H1 (cell line): ENCODE measurements at regions of chr15 and their contacts with region 1.

Region 1: GRCh38 chr15:64841258-64842095 is at the start of gene PLEKHO2:
- DNase-seq: peak; percentile 87 to 94
- H3K4me3 ChIP-seq: peak within 1 kb of the TSS; percentile 90 to 99 (median 92)
- H3K27ac ChIP-seq: peak within 1 kb of the TSS; percentile 59; the same call in 1 of the 2 replicates
- H3K4me1 ChIP-seq: peaks cover 13 to 25% (median 17%) of the 10 kb centered on the region in 4 experiments; a peak in 6 of 7 replicates
- H3K27me3 ChIP-seq: no peaks in the 10 kb centered on the region
- CTCF ChIP-seq: peak; percentile 20 to 30 (median 28); a peak in 2 of 4 replicates
- EP300 ChIP-seq: no peak
- POLR2A ChIP-seq: peak; percentile 63 to 64
- RAD21 ChIP-seq: peak; percentile 11 to 15; a peak in 3 of 4 replicates
- total RNA-seq, gene PLEKHO2: 20.1 and 20.3 TPM in 2 replicates

Region 2: GRCh38 chr15:64816452-64816851 is 25.0 kb before region 1 on chr15:
- CTCF ChIA-PET with region 1: interaction called, 53 read pairs
- POLR2A ChIA-PET with region 1: interaction called, 381 read pairs
- DNase-seq: no peak
- H3K4me3 ChIP-seq: no peak overlapping the region
- H3K27ac ChIP-seq: no peak overlapping the region
- H3K4me1 ChIP-seq: peaks cover 8 to 15% (median 10%) of the 10 kb centered on the region in 4 experiments
- H3K27me3 ChIP-seq: no peaks in the 10 kb centered on the region
- CTCF ChIP-seq: no peak
- EP300 ChIP-seq: no peak
- POLR2A ChIP-seq: no peak
- RAD21 ChIP-seq: no peak

Region 3: DNA sequence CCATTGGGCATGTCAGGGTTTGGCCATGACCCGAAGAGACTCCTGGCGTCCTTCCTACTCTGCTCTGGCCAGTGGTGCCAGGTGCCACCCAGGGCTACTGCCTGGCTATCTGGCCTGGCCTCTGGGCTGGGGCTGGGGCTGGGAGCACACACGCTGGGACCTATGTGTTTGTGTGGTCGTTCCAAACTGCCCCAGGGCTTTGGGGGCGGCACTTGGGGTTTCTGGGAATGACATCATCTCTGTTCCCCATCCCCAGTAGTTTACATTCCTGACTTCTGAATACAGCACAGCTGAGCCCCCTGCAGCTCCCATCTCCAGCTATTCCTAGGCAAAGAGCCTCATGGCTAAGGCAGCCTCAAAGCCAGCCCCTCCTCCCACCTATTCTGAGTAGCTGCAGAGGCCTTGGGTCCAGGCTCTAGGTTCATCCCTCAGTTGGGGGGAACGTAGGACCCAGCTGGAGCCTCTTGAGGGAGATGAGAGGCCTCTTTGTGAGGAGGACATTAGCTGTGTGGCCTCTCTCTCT is 24.6 kb after region 1 on chr15:
- CTCF ChIA-PET with region 1: interaction called, 4 read pairs
- POLR2A ChIA-PET with region 1: interaction called, 10 read pairs
- DNase-seq: peak in 1 of 2 experiments; percentile 79
- H3K4me3 ChIP-seq: no peak overlapping the region
- H3K27ac ChIP-seq: peak overlapping the region; percentile 50; the same call in 1 of the 2 replicates
- H3K4me1 ChIP-seq: peaks cover 5 to 25% (median 15%) of the 10 kb centered on the region in 4 experiments
- H3K27me3 ChIP-seq: no peaks in the 10 kb centered on the region
- CTCF ChIP-seq: no peak
- EP300 ChIP-seq: 0 out of 3 replicates have a peak, but pooled peaks of 1 of the 2 experiments have one; percentile 9
- POLR2A ChIP-seq: no peak
- RAD21 ChIP-seq: peak in 1 of 2 experiments; percentile 16; a peak in 2 of 4 replicates

Region 4: GRCh38 chr15:64883997-64884511 is 42.6 kb after region 1 on chr15:
- CTCF ChIA-PET with region 1: interaction called, 3 read pairs
- POLR2A ChIA-PET with region 1: interaction called, 14 read pairs
- DNase-seq: no peak
- H3K4me3 ChIP-seq: no peak overlapping the region
- H3K27ac ChIP-seq: no peak overlapping the region
- H3K4me1 ChIP-seq: peaks cover 0 to 4% (median 0%) of the 10 kb centered on the region in 4 experiments; a peak in 2 of 7 replicates
- H3K27me3 ChIP-seq: no peaks in the 10 kb centered on the region
- CTCF ChIP-seq: no peak
- EP300 ChIP-seq: no peak
- POLR2A ChIP-seq: no peak
- RAD21 ChIP-seq: no peak